BJ (cell line): ENCODE measurements at regions of chr2 and their contacts with region 1.

Region 1: DNA sequence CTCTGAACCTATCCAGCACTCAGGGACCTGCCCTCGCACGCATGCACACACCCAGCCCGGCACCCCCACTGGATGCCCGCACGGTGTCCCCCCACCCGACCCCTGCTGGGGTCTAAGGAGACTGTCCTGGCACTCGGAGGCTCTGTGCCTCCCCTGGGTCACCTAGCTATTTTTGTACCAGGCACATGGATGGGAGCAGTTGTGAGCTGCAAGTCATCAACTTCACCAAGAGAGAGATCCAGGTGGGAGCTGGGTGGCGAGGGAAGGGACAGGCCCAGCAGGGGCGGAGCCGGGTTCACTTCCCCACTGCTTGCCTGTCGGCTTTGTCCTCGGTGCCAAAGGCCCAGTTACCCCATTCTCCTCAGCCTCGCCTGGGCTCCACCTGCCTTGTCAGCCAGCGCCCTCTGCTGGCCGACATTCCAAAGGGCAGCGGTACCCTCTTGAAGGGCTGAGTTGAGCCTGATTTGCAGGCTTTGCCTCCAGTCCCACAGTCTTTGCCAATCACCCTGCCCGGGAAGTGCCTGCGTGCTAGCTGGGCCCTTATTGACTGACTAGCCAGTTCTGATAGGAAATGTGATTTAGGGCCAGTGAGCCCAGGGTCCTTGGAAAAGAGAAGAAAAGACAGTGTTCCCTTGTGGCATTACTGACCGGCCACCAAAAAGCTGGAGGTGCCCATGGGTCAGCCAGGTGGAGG is 5.8 kb downstream of the NT5DC4 start:
- DNase-seq: no peak
- H3K4me3 ChIP-seq: no peak overlapping the region
- H3K27me3 ChIP-seq: no peaks in the 10 kb centered on the region
- CTCF ChIP-seq: peak; percentile 98

Region 2: GRCh38 chr2:112584134-112584890 is 142.3 kb before region 1 on chr2 and contains the start of gene CHCHD5:
- CTCF ChIA-PET with region 1: interaction called, 19 read pairs
- POLR2A ChIA-PET with region 1: no interaction called
- DNase-seq: peak; percentile 79
- H3K4me3 ChIP-seq: peak within 1 kb of the TSS; percentile 69
- H3K27me3 ChIP-seq: no peaks in the 10 kb centered on the region
- CTCF ChIP-seq: peak; percentile 16; the same call in 1 of the 2 replicates
- polyA plus RNA-seq, gene CHCHD5: 8.1 and 14.9 TPM in 2 replicates

Region 3: DNA sequence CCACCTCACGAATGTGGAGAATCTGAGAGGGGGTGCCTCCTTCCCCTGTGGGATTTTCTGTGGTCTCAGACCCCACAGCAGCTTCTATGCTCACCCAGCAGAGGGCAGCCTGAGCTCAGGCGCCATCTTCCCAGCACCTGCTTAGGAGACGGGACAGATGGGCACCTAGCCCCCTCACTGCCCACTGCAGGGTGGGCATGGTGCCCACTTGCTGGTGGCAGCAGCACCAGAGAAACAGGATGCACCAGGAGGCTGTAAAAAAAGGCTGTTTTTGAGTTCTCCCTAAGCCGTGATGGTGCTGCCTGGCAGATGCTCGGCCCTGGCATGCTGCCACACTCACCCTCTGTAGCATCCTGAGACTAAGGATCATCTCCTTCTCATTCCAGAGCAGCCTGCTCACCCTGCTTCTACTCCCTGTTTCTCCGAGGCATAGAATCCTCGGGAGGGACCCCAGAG is 100.0 kb before region 1 on chr2:
- CTCF ChIA-PET with region 1: interaction called, 251 read pairs
- POLR2A ChIA-PET with region 1: no interaction called
- DNase-seq: peak; percentile 19
- H3K4me3 ChIP-seq: no peak overlapping the region
- H3K27me3 ChIP-seq: no peaks in the 10 kb centered on the region
- CTCF ChIP-seq: peak; percentile 96

Region 4: DNA sequence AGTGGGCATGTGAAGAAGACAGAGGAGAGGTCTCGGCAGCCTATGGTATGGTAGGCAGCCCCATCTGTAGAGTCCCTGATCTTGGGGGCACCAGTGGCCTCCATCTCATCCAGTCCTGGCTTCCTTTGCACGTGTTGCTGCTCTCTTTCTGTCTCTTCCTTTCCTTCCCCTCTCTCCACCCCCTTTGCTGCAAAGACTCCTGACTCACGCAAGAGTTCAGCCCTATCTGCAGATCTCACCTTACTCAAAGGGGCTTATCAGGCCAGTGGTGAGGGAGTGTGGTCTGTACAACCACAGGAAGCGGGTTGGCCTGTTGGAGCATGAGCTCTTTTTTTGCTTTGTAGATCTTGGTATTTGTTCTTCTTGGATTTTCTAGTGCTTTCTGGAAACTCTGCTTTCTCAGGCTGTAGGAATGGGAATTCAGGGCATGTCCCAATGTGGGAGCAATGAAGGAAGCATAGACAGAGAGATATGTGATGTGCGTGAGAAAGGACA is 20.4 kb before region 1 on chr2:
- CTCF ChIA-PET with region 1: interaction called, 19 read pairs
- POLR2A ChIA-PET with region 1: no interaction called
- DNase-seq: no peak
- H3K4me3 ChIP-seq: no peak overlapping the region
- H3K27me3 ChIP-seq: no peaks in the 10 kb centered on the region
- CTCF ChIP-seq: no peak

Region 5: DNA sequence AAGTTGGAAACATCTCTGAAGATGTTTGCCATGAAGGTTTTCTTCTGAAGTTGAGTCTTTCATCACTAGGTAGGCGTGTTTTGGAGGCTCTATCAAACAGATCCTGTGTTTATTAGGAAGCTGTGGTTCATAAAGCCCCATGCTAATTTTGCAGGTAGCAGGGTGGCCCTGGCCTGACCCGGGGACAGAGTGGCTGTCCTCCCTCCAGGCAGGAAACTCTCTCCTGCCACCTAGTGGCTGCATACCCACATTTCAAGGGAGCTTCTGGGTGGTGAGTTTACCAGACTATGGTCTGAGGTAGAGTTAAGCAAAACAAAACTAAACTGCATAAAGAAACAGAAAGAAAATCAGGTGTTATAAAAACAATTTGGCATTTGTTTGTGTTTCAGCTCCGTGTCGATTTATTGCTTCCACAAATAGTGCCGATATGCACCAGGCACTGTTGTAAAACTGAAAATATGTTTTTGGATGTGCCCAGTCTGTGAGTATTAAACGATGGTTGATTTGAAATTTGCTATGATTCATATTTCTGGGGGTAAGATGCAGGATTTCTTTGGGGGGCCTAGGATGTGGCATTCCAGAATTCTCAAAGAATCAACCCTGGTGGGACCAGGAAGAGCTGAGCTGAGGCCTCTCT is 158.3 kb after region 1 on chr2:
- CTCF ChIA-PET with region 1: interaction called, 18 read pairs
- POLR2A ChIA-PET with region 1: no interaction called
- DNase-seq: no peak
- H3K4me3 ChIP-seq: no peak overlapping the region
- H3K27me3 ChIP-seq: no peaks in the 10 kb centered on the region
- CTCF ChIP-seq: peak; percentile 69

Region 6: DNA sequence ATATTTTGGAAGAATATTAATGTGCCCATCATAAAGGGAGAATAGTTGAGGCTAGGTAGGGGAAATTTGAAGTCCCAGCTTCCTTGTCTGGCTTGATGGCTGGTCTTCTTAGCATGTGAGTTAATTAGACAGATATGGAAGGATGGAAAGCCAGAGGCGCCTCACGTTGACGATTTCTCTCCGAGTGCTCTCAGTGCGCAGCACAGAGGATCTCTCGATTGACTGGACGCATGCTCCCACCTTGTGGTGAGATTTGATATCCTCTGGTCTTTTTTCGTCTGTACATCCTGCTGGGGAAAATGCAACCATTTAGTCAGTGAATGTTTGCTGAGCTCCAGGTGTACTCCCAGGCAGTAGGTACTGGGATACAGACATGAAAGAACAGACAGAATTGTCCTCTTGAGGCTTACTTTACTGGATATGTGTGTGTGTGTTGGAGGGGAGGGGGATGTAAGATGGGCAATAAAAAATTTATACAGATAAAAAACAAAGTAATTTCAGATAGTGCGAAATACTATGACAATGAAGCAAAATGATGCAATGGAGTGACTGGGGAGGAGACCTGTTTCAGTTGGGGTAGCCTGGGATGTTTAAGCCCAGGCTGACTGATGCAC is 643.9 kb after region 1 on chr2:
- CTCF ChIA-PET with region 1: no interaction called
- POLR2A ChIA-PET with region 1: no interaction called
- DNase-seq: no peak
- H3K4me3 ChIP-seq: no peak overlapping the region
- H3K27me3 ChIP-seq: no peaks in the 10 kb centered on the region; the same call in 1 of the 2 replicates
- CTCF ChIP-seq: peak; percentile 60